IMR-90 (cell line): ENCODE measurements at regions of chr13 and their contacts with region 1.

Region 1: GRCh38 chr13:50587115-50587514 is 256.4 kb downstream of the DLEU7 start:
- DNase-seq: no peak
- ATAC-seq: no peak
- H3K4me3 ChIP-seq: no peak overlapping the region
- H3K27ac ChIP-seq: no peak overlapping the region
- H3K4me1 ChIP-seq: peaks cover 9% of the 10 kb centered on the region
- H3K27me3 ChIP-seq: peaks cover 35% of the 10 kb centered on the region
- CTCF ChIP-seq: no peak
- POLR2A ChIP-seq: no peak
- RAD21 ChIP-seq: no peak

Region 2: GRCh38 chr13:49679246-49679645 is 907.9 kb before region 1 on chr13:
- CTCF ChIA-PET with region 1: no interaction called
- POLR2A ChIA-PET with region 1: interaction called, 11 read pairs
- dilution Hi-C with region 1: no loop called
- in situ Hi-C with region 1: no loop called
- intact Hi-C with region 1: no loop called
- DNase-seq: peak; percentile 35
- ATAC-seq: peak; percentile 59; the same call in 1 of the 2 replicates
- H3K4me3 ChIP-seq: no peak overlapping the region
- H3K27ac ChIP-seq: no peak overlapping the region
- H3K4me1 ChIP-seq: peaks cover 4% of the 10 kb centered on the region
- H3K27me3 ChIP-seq: no peaks in the 10 kb centered on the region
- CTCF ChIP-seq: peak; percentile 22; the same call in 1 of the 2 replicates
- POLR2A ChIP-seq: no peak
- RAD21 ChIP-seq: peak; percentile 17; the same call in 1 of the 2 replicates